Ovary (tissue), 10 donors: ENCODE measurements at regions of chr2 and their contacts with region 1.

Region 1: GRCh38 chr2:37877457-37878315 is 47.4 kb upstream of the RMDN2 start:
- DNase-seq: peak in 1 of 5 donors; percentile 32
- H3K4me3 ChIP-seq: no peak overlapping the region
- H3K27ac ChIP-seq: no peak overlapping the region
- H3K4me1 ChIP-seq: no peaks in the 10 kb centered on the region
- H3K27me3 ChIP-seq: no peaks in the 10 kb centered on the region
- CTCF ChIP-seq: peak; percentile 59 to 77 (median 73)
- EP300 ChIP-seq: no peak
- POLR2A ChIP-seq: no peak

Region 2: GRCh38 chr2:37389989-37390765 is 487.5 kb before region 1 on chr2:
- intact Hi-C with region 1: loop called in 2 of 4 experiments (anchors 5 kb)
- DNase-seq: no peak
- H3K4me3 ChIP-seq: no peak overlapping the region
- H3K27ac ChIP-seq: no peak overlapping the region
- H3K4me1 ChIP-seq: no peaks in the 10 kb centered on the region
- H3K27me3 ChIP-seq: no peaks in the 10 kb centered on the region
- CTCF ChIP-seq: no peak
- EP300 ChIP-seq: no peak
- POLR2A ChIP-seq: no peak